Caco-2 (cell line): ENCODE measurements at regions of chr12 and their contacts with region 1.

Region 1: GRCh38 chr12:105228494-105228893 is 7.5 kb downstream of the APPL2 start:
- DNase-seq: no peak
- H3K4me3 ChIP-seq: no peak overlapping the region
- H3K4me3 Mint-ChIP-seq: no peak overlapping the region
- H3K27ac Mint-ChIP-seq: peak overlapping the region; percentile 57
- H3K4me1 ChIP-seq: peaks cover 31% of the 10 kb centered on the region
- H3K4me1 Mint-ChIP-seq: peaks cover 27% of the 10 kb centered on the region
- H3K27me3 ChIP-seq: no peaks in the 10 kb centered on the region
- H3K27me3 Mint-ChIP-seq: no peaks in the 10 kb centered on the region
- CTCF ChIP-seq: no peak

Region 2: GRCh38 chr12:105214623-105215382 is 13.7 kb before region 1 on chr12:
- CTCF ChIA-PET with region 1: interaction called, 4 read pairs
- POLR2A ChIA-PET with region 1: interaction called, 4 read pairs
- intact Hi-C with region 1: loop called (anchors 2 kb)
- DNase-seq: peak; percentile 82 to 92
- H3K4me3 ChIP-seq: no peak overlapping the region
- H3K4me3 Mint-ChIP-seq: peak overlapping the region; percentile 40
- H3K27ac Mint-ChIP-seq: peak overlapping the region; percentile 92
- H3K4me1 ChIP-seq: peaks cover 32% of the 10 kb centered on the region
- H3K4me1 Mint-ChIP-seq: peaks cover 22% of the 10 kb centered on the region
- H3K27me3 ChIP-seq: no peaks in the 10 kb centered on the region
- H3K27me3 Mint-ChIP-seq: no peaks in the 10 kb centered on the region
- CTCF ChIP-seq: no peak